ENCODE measurements at regions of chr17 and their contacts with region 1.

Region 1: DNA sequence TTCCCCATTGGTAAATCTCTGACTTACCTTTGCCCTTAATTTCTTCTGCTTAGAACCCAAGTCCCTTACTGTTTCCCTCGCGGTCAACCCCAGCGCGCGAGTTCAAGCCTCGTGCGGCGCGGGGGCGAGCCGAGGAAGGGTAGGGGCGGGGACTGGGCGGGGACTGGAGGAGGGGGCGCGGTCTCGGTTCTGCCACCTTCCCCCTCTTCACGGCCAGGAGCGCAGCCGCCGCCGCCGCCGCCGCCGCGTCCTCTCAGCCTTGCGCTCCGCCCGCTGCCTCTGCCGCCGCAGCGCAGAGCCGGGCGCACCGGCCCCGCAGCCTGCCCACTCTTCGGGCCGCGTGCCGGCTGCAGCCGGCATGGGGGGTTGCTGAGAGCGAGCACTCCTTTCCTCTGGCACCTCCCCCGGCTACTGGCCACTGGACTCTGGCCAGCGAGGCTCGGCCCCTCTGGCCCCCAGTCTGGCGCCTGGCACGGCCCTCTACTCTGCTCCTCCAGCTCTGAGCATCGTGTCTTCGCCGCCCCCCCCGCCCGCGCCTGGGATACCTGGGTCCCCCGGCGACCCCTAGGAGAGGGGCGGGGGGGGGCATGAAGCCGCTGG is at the start of gene RAPGEFL1:
- DNase-seq: peak; percentile 69
- total RNA-seq, gene RAPGEFL1: 1.7 and 5.9 TPM in 2 replicates

Region 2: DNA sequence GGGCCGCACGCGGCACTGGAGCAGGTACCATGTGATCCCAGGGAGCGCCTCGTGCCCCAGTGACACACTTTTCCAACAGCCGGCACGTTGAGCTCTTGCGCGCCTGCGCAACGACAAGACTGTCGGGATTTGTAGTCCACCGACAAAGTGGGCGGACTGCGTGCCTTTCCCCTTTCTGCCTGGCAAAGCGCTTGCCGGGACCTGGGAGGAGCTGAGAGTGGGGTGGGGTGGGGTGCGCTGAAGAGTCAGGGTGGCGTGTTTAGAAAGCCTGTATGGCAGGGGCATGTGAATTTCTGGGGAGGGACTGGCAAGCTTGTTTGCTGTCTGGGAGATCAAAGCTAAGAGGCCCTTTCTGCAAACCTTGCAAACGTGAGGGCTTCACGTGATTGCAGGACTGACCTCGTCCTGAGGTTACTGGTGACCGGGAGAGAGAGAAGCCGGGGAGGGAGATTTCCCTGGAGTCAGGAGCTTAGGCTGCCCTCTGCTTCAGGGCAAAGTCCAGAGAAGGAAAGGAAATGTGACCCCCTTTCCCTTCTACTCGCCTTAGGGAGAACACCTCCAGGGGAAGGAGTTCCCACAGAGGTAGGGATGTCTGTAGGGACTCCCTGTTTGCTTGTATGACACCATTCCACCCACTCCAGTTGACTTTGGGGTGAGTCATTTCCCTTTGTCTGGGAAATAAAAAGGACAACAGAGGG is 76.6 kb before region 1 on chr17:
- in situ Hi-C with region 1: loop called (anchors 10 kb)
- DNase-seq: peak; percentile 98